Mammary epithelial cell (primary cell): ENCODE measurements at regions of chr1 and their contacts with region 1.

Region 1: GRCh38 chr1:225660544-225660946 is 7.6 kb upstream of the ENAH start:
- DNase-seq: no peak
- H3K4me3 ChIP-seq: no peak overlapping the region
- H3K27ac ChIP-seq: no peak overlapping the region
- H3K4me1 ChIP-seq: peaks cover 24% of the 10 kb centered on the region
- H3K27me3 ChIP-seq: no peaks in the 10 kb centered on the region
- CTCF ChIP-seq: no peak

Region 2: GRCh38 chr1:225617479-225617878 is 43.1 kb before region 1 on chr1:
- CTCF ChIA-PET with region 1: no interaction called
- dilution Hi-C with region 1: loop called (anchors 5 kb)
- in situ Hi-C with region 1: no loop called
- intact Hi-C with region 1: no loop called
- DNase-seq: no peak
- H3K4me3 ChIP-seq: no peak overlapping the region
- H3K27ac ChIP-seq: no peak overlapping the region
- H3K4me1 ChIP-seq: no peaks in the 10 kb centered on the region
- H3K27me3 ChIP-seq: no peaks in the 10 kb centered on the region
- CTCF ChIP-seq: no peak

Region 3: GRCh38 chr1:225694151-225694603 is 33.6 kb after region 1 on chr1:
- CTCF ChIA-PET with region 1: no interaction called
- dilution Hi-C with region 1: no loop called
- in situ Hi-C with region 1: no loop called
- intact Hi-C with region 1: no loop called
- DNase-seq: no peak
- H3K4me3 ChIP-seq: no peak overlapping the region
- H3K27ac ChIP-seq: no peak overlapping the region
- H3K4me1 ChIP-seq: peaks cover under 1% of the 10 kb centered on the region
- H3K27me3 ChIP-seq: no peaks in the 10 kb centered on the region
- CTCF ChIP-seq: no peak

Region 4: GRCh38 chr1:225709101-225709500 is 48.6 kb after region 1 on chr1:
- CTCF ChIA-PET with region 1: no interaction called
- dilution Hi-C with region 1: loop called (anchors 5 kb)
- in situ Hi-C with region 1: no loop called
- intact Hi-C with region 1: no loop called
- DNase-seq: peak; percentile 81
- H3K4me3 ChIP-seq: no peak overlapping the region
- H3K27ac ChIP-seq: no peak overlapping the region
- H3K4me1 ChIP-seq: peaks cover 29% of the 10 kb centered on the region
- H3K27me3 ChIP-seq: no peaks in the 10 kb centered on the region
- CTCF ChIP-seq: no peak

Region 5: GRCh38 chr1:225735252-225736149 is 75.0 kb after region 1 on chr1:
- CTCF ChIA-PET with region 1: no interaction called
- dilution Hi-C with region 1: loop called (anchors 5 kb)
- in situ Hi-C with region 1: no loop called
- intact Hi-C with region 1: no loop called
- DNase-seq: peak; percentile 97
- H3K4me3 ChIP-seq: peak overlapping the region in 1 of 3 experiments; percentile 31
- H3K27ac ChIP-seq: peak overlapping the region; percentile 72
- H3K4me1 ChIP-seq: peaks cover 29% of the 10 kb centered on the region
- H3K27me3 ChIP-seq: no peaks in the 10 kb centered on the region
- CTCF ChIP-seq: peak; percentile 9 to 31